ENCODE measurements at regions of chr11 and their contacts with region 1.

Region 1: DNA sequence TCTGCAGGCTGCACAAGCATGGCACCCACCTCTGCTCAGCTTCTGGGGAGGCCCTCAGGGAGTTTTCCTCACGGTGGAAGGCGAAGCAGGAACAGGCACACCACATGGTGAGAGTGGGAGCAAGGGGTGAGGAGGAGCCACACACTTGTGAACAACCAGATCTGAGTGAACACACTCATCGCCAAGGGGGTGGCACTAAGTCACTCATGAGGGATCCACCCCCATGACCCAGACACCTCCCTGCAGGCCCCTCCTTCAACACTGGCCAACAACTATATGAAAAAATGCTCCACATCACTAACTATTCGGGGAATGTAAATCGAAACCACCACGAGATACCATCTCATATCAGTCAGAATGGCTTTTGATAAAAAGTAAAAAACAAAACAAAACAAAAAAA is 722 bp upstream of the KRTAP5-2 start:
- DNase-seq: no peak
- H3K4me3 ChIP-seq: no peak overlapping the region
- H3K27ac ChIP-seq: no peak overlapping the region
- H3K4me1 ChIP-seq: no peaks in the 10 kb centered on the region
- H3K27me3 ChIP-seq: peaks cover 22% of the 10 kb centered on the region
- CTCF ChIP-seq: no peak
- EP300 ChIP-seq: no peak
- RAD21 ChIP-seq: no peak

Region 2: GRCh38 chr11:1482581-1483444 is 116.0 kb before region 1 on chr11:
- CTCF ChIA-PET with region 1: no interaction called
- POLR2A ChIA-PET with region 1: no interaction called
- DNase-seq: no peak
- H3K4me3 ChIP-seq: no peak overlapping the region
- H3K27ac ChIP-seq: no peak overlapping the region; a peak in 1 of 4 replicates
- H3K4me1 ChIP-seq: peaks cover 0 to 22% of the 10 kb centered on the region in 2 experiments; a peak in 1 of 4 replicates
- H3K27me3 ChIP-seq: no peaks in the 10 kb centered on the region
- CTCF ChIP-seq: peak; percentile 24; the same call in 1 of the 2 replicates
- EP300 ChIP-seq: no peak
- RAD21 ChIP-seq: no peak

Region 3: GRCh38 chr11:1613516-1613915 is 14.7 kb after region 1 on chr11:
- CTCF ChIA-PET with region 1: interaction called, 17 read pairs
- POLR2A ChIA-PET with region 1: no interaction called
- DNase-seq: no peak
- H3K4me3 ChIP-seq: no peak overlapping the region
- H3K27ac ChIP-seq: no peak overlapping the region
- H3K4me1 ChIP-seq: no peaks in the 10 kb centered on the region
- H3K27me3 ChIP-seq: no peaks in the 10 kb centered on the region; the same call in 1 of the 2 replicates
- CTCF ChIP-seq: no peak
- EP300 ChIP-seq: no peak
- RAD21 ChIP-seq: no peak

Region 4: GRCh38 chr11:1619449-1619848 is 20.6 kb after region 1 on chr11:
- CTCF ChIA-PET with region 1: interaction called, 12 read pairs
- POLR2A ChIA-PET with region 1: no interaction called
- DNase-seq: no peak
- H3K4me3 ChIP-seq: no peak overlapping the region
- H3K27ac ChIP-seq: no peak overlapping the region
- H3K4me1 ChIP-seq: no peaks in the 10 kb centered on the region; a peak in 1 of 4 replicates
- H3K27me3 ChIP-seq: no peaks in the 10 kb centered on the region; the same call in 1 of the 2 replicates
- CTCF ChIP-seq: no peak
- EP300 ChIP-seq: no peak
- RAD21 ChIP-seq: no peak

Region 5: DNA sequence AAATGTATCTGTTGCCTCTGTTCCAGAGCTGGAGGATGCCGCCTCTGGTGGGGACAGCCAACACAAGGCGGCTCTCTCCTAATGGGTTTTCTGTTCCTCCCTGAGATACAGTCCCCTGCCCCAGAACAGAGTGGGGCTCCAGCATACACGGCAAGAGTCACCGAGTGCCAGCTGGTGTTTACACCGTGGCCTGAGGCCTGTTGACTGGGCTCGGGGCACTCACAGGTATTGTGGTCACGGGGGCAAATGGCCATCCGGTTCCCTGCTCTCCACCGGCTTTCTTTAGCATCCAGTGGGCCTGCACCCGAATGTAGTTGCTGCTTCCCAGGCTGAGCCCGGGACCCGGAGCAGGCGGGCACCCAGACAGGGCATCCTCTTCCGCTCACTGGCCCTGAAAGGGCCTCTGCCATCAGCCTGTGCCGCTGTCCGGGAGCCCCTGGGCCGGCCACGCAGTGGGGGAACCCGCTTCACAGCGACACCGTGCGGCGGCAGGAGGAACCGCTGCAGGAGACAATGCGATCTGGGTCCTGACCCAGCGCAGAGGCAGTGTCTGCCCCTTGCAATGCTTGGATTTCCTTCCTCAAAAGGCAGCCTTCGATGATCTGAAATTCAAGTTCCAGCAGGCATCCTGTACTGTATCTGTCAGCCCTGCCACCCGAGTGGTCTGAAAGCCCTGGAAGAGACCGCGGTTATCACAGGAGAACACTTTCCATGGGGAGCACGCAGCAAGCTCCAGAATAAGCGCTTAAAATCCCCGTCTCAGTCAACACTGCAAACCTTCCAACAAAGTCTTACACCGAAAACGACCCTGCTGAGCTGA is 29.9 kb after region 1 on chr11:
- CTCF ChIA-PET with region 1: interaction called, 45 read pairs
- POLR2A ChIA-PET with region 1: no interaction called
- DNase-seq: peak; percentile 96
- H3K4me3 ChIP-seq: peak overlapping the region in 1 of 2 experiments; percentile 35; a peak in 1 of 4 replicates
- H3K27ac ChIP-seq: no peak overlapping the region
- H3K4me1 ChIP-seq: peaks cover 0 to 11% of the 10 kb centered on the region in 2 experiments; a peak in 1 of 4 replicates
- H3K27me3 ChIP-seq: peaks cover 19% of the 10 kb centered on the region; the same call in 1 of the 2 replicates
- CTCF ChIP-seq: peak; percentile 85
- EP300 ChIP-seq: no peak
- RAD21 ChIP-seq: peak; percentile 69

Region 6: GRCh38 chr11:1640076-1640946 is 41.5 kb after region 1 on chr11:
- CTCF ChIA-PET with region 1: interaction called, 14 read pairs
- POLR2A ChIA-PET with region 1: no interaction called
- DNase-seq: peak; percentile 86
- H3K4me3 ChIP-seq: no peak overlapping the region; a peak in 1 of 4 replicates
- H3K27ac ChIP-seq: no peak overlapping the region; a peak in 1 of 4 replicates
- H3K4me1 ChIP-seq: peaks cover 0 to 25% of the 10 kb centered on the region in 2 experiments; a peak in 1 of 4 replicates
- H3K27me3 ChIP-seq: no peaks in the 10 kb centered on the region
- CTCF ChIP-seq: peak; percentile 82
- EP300 ChIP-seq: no peak
- RAD21 ChIP-seq: peak; percentile 14; the same call in 1 of the 2 replicates